Adrenal gland (tissue), 19 donors: ENCODE measurements at regions of chr17 and their contacts with region 1.

Region 1: GRCh38 chr17:64679688-64680216 is 17.6 kb upstream of the SMURF2 start:
- DNase-seq: peak in 1 of 7 donors; percentile 21
- H3K4me3 ChIP-seq: no peak overlapping the region
- H3K27ac ChIP-seq: no peak overlapping the region
- H3K4me1 ChIP-seq: no peaks in the 10 kb centered on the region
- H3K27me3 ChIP-seq: no peaks in the 10 kb centered on the region
- CTCF ChIP-seq: no peak
- POLR2A ChIP-seq: no peak

Region 2: DNA sequence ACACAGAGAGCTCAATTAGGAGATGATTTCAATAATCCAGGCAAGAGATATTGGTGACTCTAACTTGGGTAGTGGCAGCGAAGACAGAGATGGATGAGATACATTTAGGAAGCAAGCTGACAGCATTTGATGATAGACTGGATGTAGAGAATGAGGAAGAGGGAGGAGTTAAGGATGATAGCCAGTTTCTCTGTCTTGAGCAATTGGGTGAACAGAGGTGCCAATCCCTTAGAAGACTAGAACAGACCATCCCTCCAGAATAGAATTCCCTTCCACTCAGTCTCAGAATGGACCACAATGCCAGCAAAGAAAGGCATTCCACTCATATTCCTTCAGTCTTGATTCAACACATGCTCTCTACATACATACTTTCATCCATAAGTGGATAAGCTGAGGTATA is 200.1 kb before region 1 on chr17:
- intact Hi-C with region 1: no loop called
- DNase-seq: no peak
- H3K4me3 ChIP-seq: no peak overlapping the region
- H3K27ac ChIP-seq: no peak overlapping the region
- H3K4me1 ChIP-seq: no peaks in the 10 kb centered on the region
- H3K27me3 ChIP-seq: no peaks in the 10 kb centered on the region
- CTCF ChIP-seq: no peak
- POLR2A ChIP-seq: no peak

Region 3: DNA sequence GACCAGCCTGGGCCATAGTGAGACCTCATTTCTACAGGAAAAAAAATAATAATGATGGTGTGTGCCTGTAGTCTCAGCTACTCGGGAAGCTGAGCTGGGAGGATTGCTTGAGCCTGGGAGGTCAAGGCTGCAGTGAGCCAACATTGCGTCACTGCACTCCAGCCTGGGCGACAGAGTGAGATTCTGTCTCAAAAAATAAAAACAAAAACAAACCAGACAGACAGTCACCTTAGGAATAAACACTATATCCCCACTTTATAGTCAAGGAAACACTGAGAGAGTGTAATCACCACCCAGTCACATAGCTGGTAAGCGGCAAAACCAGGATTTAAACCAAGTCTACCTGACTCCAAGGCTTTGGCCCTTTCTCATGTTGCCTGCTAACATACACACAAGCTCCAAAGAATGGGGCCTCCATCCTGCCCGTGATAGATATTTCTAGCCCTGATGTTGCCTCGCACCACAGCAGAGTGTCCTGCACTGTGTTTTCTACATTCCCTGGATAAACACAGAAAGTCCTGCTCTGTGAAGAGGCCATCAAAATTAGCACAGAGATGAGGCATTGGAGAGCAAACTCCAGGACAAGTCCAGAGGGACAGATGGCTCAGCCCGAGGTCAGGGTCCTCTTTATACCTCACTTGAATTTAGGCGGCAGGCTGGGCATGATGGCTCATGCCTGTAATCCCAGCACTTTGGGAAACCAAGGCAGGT is 48.4 kb after region 1 on chr17:
- intact Hi-C with region 1: loop called in 1 of 2 experiments (anchors 10 kb)
- DNase-seq: peak; percentile 56 to 81 (median 71)
- H3K4me3 ChIP-seq: no peak overlapping the region
- H3K27ac ChIP-seq: peak overlapping the region in 4 of 5 donors; percentile 16 to 82 (median 65)
- H3K4me1 ChIP-seq: peaks cover 15 to 31% of the 10 kb centered on the region in 2 donors
- H3K27me3 ChIP-seq: no peaks in the 10 kb centered on the region
- CTCF ChIP-seq: no peak
- POLR2A ChIP-seq: no peak

Region 4: DNA sequence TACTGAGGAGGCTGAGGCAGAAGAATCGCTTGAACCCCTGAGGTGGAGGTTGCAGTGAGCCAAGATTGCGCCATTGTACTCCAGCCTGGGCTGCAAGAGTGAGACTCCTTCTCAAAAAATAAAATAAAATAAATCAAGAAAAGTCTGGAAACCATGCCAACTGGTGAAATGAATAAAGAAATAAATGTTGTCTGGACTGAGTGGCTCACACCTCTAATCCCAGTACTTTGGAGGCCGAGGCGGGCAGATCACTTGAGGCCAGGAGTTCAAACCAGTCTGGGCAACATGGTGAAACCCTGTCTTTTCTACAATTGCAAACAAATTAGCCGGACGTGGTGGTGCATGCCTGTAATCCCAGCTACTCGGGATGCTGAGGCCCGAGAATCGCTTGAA is 240.3 kb after region 1 on chr17:
- intact Hi-C with region 1: no loop called
- DNase-seq: peak in 5 of 7 donors; percentile 21 to 47 (median 36)
- H3K4me3 ChIP-seq: peak overlapping the region in 2 of 4 donors; percentile 60 to 86
- H3K27ac ChIP-seq: peak overlapping the region; percentile 57 to 95 (median 94)
- H3K4me1 ChIP-seq: peaks cover 0 to 4% of the 10 kb centered on the region in 2 donors
- H3K27me3 ChIP-seq: no peaks in the 10 kb centered on the region
- CTCF ChIP-seq: peak in 1 of 6 experiments; percentile 9
- POLR2A ChIP-seq: no peak